MCF 10A (cell line): ENCODE measurements at regions of chr10 and their contacts with region 1.

Region 1: DNA sequence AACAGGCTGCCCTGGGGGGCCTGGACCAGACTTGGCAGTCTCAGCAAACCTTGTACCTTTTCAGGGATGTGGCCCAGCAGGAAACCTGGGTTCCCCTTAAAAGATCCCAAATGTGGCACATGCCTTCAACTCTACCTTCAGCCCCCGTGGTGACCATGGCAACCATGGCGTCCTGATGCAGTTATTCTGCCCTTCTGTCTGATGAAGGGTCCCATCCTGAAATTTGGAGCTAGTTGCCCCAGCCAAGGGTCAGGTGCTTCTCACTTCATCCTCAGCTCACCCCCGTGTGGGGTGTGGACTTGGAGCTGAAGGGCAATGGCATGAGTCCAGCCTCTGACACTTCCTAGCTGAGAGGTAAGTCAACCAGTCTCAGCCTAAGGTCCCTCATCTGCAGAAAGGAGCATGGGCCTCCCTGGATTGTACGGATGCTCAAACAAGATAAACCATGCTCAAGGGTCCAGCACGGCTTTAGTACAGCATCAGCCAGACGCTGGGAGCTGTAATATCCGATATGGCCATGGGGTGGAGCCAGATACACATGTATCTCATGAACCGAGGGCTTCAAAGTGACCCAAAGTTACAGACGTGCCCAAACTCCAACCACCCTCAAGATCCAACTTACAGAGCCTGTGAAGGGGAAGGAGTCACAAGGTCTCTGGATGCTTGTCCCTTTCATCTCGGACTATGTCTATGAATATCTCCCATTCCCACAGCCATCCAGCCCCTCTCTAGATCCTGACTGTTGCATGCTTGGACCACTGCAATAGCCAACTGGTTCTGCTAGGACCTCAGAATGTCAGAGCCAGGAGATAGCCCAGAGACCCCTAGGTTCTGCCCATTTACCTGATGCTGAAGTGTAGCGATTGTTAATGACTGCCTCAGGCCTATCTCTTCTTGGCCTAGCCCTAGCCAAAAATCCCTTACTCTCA is 142.5 kb downstream of the SH3PXD2A start:
- DNase-seq: peak; percentile 79
- H3K4me3 Mint-ChIP-seq: no peak overlapping the region
- H3K27ac Mint-ChIP-seq: peak overlapping the region; percentile 31
- H3K4me1 Mint-ChIP-seq: peaks cover 29% of the 10 kb centered on the region
- H3K27me3 Mint-ChIP-seq: no peaks in the 10 kb centered on the region
- CTCF ChIP-seq: peak; percentile 93

Region 2: DNA sequence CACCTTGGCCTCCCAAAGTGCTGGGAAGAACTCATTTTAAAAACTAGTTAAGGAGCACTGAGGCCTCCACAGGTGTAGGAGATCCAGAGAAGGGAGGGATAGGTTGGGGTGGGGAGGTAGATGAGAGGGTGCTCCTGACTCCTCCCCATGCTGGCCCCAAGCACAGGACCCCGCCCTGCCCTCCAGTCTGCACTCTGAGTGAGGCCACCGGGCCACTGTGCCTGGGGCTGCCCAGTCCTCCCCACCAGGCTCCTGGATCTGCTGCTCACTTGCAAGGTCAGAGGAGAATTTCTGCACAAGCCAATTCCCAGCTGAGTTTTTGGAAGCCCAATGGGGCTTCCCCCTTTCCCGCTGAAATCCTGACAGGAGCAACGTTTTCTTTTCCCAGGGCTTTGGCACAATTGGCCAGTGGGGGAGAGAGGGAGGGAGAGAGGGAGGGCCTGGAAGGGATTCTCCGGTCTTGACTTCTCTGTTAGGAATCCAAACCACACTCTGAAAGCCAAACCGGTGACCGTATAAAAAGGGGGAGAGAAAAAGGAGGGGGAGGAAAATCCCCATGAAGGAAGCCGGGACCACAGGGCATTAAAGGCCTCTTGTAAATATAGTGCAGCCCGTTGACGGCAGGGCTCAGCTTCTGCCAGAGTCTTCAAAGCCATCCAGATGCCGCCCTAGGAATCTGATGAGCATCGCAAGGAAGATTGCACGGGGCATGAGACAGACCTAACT is 26.4 kb after region 1 on chr10:
- CTCF ChIA-PET with region 1: interaction called, 10 read pairs
- POLR2A ChIA-PET with region 1: no interaction called
- intact Hi-C with region 1: no loop called
- DNase-seq: peak; percentile 60
- H3K4me3 Mint-ChIP-seq: peak overlapping the region; percentile 58
- H3K27ac Mint-ChIP-seq: peak overlapping the region; percentile 22
- H3K4me1 Mint-ChIP-seq: peaks cover 15% of the 10 kb centered on the region
- H3K27me3 Mint-ChIP-seq: no peaks in the 10 kb centered on the region
- CTCF ChIP-seq: no peak

Region 3: GRCh38 chr10:103772096-103772845 is 59.4 kb after region 1 on chr10:
- CTCF ChIA-PET with region 1: interaction called, 4 read pairs
- POLR2A ChIA-PET with region 1: no interaction called
- intact Hi-C with region 1: loop called (anchors 10 kb)
- DNase-seq: peak; percentile 70
- H3K4me3 Mint-ChIP-seq: peak overlapping the region; percentile 76
- H3K27ac Mint-ChIP-seq: peak overlapping the region; percentile 84
- H3K4me1 Mint-ChIP-seq: peaks cover 13% of the 10 kb centered on the region
- H3K27me3 Mint-ChIP-seq: no peaks in the 10 kb centered on the region
- CTCF ChIP-seq: no peak

Region 4: GRCh38 chr10:103781329-103782061 is 68.7 kb after region 1 on chr10:
- CTCF ChIA-PET with region 1: interaction called, 3 read pairs
- POLR2A ChIA-PET with region 1: interaction called, 10 read pairs
- intact Hi-C with region 1: loop called (anchors 10 kb)
- DNase-seq: peak; percentile 66
- H3K4me3 Mint-ChIP-seq: peak overlapping the region; percentile 23
- H3K27ac Mint-ChIP-seq: peak overlapping the region; percentile 74
- H3K4me1 Mint-ChIP-seq: peaks cover 47% of the 10 kb centered on the region
- H3K27me3 Mint-ChIP-seq: no peaks in the 10 kb centered on the region
- CTCF ChIP-seq: peak; percentile 12

Region 5: GRCh38 chr10:103870516-103870915 is 157.7 kb after region 1 on chr10:
- CTCF ChIA-PET with region 1: interaction called, 37 read pairs
- POLR2A ChIA-PET with region 1: interaction called, 10 read pairs
- intact Hi-C with region 1: no loop called
- DNase-seq: peak; percentile 97
- H3K4me3 Mint-ChIP-seq: peak overlapping the region; percentile 70
- H3K27ac Mint-ChIP-seq: peak overlapping the region; percentile 97
- H3K4me1 Mint-ChIP-seq: peaks cover 29% of the 10 kb centered on the region
- H3K27me3 Mint-ChIP-seq: no peaks in the 10 kb centered on the region
- CTCF ChIP-seq: no peak

Region 6: DNA sequence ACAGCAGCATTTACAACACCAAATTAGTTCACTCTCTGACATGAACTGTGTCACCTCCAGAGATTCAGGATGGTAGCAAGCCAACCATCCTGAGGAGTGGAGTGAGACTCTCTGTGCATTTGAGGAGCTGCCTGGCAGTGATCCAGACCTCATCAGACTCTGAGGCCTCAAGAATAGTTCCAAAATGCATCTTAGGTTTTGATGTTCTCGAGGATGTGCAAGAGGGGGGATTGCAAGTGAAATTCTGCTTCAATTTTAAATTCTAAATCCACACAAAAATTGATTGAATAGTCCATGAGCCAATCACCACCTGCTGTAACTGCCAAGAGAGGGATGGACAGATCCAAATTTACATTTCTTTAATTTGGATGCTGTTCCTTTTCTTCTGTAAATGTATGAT is 303.8 kb after region 1 on chr10:
- CTCF ChIA-PET with region 1: no interaction called
- POLR2A ChIA-PET with region 1: no interaction called
- intact Hi-C with region 1: loop called (anchors 10 kb)
- DNase-seq: no peak
- H3K4me3 Mint-ChIP-seq: no peak overlapping the region
- H3K27ac Mint-ChIP-seq: no peak overlapping the region
- H3K4me1 Mint-ChIP-seq: no peaks in the 10 kb centered on the region
- H3K27me3 Mint-ChIP-seq: no peaks in the 10 kb centered on the region
- CTCF ChIP-seq: no peak